ENCODE measurements at regions of chr6 and their contacts with region 1.

Region 1: DNA sequence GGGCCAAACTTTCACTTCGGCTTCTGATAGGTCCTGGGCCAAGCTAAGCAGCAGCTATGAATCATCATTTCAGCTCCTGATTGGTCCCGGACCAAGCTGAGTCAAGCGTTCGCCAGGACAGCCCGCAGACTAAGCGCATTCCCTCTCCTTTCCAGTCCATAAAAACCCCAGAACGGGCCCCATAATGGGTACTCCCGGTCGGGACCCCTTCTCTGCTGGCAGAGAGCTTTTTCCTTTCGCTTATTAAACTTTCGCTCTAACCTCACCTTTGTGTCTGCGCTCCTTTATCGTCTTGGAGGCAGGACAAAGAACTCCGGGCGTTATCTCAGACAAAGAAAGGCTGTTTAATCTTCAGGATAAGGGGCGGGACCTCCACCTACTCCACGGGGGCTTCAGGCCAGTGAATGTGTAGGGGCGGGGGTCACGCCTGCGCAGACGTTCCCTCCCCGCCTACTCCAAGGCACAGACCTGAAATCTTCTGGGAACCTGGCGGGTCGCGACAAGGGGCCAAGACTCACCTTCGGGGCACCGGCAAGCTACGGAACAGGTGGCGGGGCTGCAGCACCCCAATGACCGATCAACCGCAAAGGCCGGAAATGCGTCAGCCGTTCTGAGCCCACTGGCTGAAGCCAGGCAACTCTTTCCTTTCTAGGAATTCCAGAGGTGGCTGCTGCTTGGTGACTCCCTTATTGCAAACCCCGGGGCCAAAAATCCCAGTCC is at the start of gene ZSCAN31:
- DNase-seq: peak; percentile 98
- H3K4me3 ChIP-seq: peak within 1 kb of the TSS; percentile 83
- H3K27ac ChIP-seq: peak within 1 kb of the TSS; percentile 100
- H3K27me3 ChIP-seq: peaks cover 2% of the 10 kb centered on the region
- CTCF ChIP-seq: no peak
- polyA plus RNA-seq, gene ZSCAN31: 5.0 TPM in 2 replicates

Region 2: DNA sequence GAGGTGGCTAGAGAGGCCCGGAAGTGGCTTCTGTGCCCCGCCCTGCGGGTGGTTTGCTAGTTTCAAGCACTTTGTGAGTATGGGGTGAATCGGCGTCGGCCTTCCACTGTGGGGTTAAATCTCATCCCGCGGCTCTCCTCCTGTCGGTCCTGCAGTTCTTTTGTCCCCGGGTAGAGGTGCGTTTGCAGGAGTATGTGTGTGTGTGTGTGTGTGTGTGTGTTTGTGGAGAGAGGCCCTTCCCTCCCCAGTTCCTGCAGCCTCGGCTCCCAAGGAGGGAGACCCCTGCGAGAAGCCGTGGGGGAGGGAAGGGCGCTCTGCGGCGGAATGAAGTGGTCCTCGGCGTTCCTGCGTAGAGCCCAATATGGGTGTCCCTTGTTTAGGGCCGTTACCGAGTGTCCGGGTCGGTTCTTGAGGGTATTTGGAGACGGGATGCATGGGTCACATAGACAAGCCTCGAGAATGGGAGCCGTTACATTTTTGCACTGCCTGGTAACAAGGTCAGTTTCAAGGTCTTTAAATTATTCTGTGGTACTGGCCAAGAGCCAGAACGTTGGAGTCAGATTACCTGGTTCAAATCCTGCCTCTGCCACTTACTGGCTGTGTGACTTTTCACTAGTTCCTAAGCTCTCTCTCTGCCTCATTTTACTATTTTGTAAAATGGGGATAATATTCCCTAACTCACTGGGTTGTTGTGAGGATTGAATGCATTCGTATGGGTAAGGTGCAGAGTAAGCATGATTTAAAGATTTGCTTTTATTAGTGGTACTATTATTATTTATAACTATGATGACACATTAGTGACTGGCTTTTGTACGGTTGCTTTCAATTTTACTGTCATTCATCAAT is 14.4 kb after region 1 on chr6 and contains the start of gene ZKSCAN3:
- CTCF ChIA-PET with region 1: interaction called, 11 read pairs
- POLR2A ChIA-PET with region 1: interaction called, 11 read pairs
- DNase-seq: peak; percentile 37
- H3K4me3 ChIP-seq: peak within 1 kb of the TSS; percentile 85
- H3K27ac ChIP-seq: peak within 1 kb of the TSS; percentile 43
- H3K27me3 ChIP-seq: peaks cover 7% of the 10 kb centered on the region
- CTCF ChIP-seq: no peak
- polyA plus RNA-seq, gene ZKSCAN3: 4.7 and 6.0 TPM in 2 replicates

Measured in AG04450 (cell line).